ENCODE measurements at regions of chr15 and their contacts with region 1.

Region 1: DNA sequence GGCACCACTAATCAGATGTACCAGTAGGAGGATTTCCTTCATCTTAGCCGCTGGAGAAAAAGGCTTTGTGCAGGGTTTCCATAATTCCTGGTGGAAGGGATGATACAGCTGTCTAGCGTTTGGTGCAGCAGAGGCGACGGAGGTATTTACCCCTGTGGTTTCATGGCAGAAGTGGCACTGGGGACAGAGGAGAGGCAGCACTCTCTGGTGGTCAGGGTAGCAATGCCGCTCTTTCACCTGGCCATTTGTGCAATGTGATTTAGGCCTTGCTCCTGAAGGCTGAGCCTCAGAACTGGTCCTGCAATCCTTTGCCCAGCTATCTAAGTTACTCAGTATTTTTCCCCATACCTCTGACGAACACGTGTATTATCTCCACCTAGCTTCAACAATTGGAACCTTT is 47.1 kb upstream of the BNIP2 start:
- DNase-seq: no peak
- ATAC-seq: no peak
- H3K4me3 ChIP-seq: no peak overlapping the region
- H3K27ac ChIP-seq: no peak overlapping the region
- H3K4me1 ChIP-seq: no peaks in the 10 kb centered on the region
- H3K27me3 ChIP-seq: no peaks in the 10 kb centered on the region
- CTCF ChIP-seq: no peak
- POLR2A ChIP-seq: no peak

Region 2: DNA sequence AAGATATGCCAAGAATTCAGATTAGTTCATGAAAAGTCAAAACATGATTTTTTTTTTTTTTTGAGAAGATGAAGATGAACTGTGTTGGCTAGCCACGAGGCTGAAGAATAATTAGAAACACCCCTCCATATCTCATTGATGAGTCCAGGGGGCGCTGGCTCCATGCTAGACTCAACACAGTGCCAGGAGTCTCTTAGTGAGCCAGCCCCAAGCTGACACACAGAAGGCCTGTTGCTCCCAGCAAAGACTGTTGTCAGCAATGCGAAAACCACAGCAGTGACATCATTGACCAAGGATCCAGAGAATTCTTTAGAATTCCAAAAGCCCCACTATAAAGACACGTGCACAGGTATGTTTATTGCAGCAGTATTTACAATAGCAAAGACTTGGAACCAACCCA is 476.4 kb after region 1 on chr15:
- intact Hi-C with region 1: no loop called
- DNase-seq: no peak
- ATAC-seq: no peak
- H3K4me3 ChIP-seq: no peak overlapping the region
- H3K27ac ChIP-seq: no peak overlapping the region
- H3K4me1 ChIP-seq: no peaks in the 10 kb centered on the region
- H3K27me3 ChIP-seq: no peaks in the 10 kb centered on the region
- CTCF ChIP-seq: no peak
- POLR2A ChIP-seq: no peak

Region 3: DNA sequence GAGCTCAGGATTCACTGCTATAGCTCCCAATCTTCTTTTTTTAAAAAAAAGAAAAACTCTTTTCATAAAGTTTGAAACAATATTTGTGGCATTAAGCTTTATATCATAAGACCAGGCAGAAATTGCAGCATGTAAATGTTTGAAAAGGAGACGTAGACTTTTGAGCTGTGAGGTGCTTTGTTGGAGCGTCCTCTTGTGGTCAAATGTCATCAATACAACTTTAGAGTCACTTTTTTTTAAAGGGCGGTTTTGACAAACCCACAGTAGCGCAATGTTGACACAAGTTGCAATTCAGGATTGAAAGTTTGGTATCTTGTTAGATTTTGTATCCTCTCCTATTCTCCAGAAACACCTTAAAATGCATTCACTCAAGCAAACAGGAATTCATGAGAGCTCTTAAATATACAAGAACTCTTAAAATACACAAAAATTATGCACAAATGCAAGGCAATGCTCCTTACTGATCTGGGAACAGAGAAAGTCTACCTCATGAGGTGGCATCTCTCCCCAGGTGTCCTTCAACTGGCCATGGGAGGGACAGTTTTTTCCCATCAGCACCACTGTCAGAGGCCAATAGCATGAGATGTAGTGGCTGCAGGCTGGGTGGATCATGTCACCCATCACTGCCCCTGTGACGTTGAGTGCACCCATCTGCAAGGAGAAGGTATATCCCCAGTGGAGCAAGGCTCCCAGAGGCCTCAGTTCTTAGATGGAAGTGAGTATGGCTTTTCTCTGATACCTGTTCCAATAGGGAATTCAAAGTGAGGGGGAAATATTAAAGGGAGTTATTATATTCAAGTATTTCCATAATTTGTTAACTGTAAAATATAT is 590.9 kb after region 1 on chr15:
- intact Hi-C with region 1: loop called (anchors 10 kb)
- DNase-seq: peak in 1 of 4 donors; percentile 38
- ATAC-seq: no peak
- H3K4me3 ChIP-seq: no peak overlapping the region
- H3K27ac ChIP-seq: no peak overlapping the region
- H3K4me1 ChIP-seq: no peaks in the 10 kb centered on the region
- H3K27me3 ChIP-seq: peaks cover 0 to 10% of the 10 kb centered on the region in 2 donors
- CTCF ChIP-seq: peak; percentile 52 to 80 (median 71)
- POLR2A ChIP-seq: no peak